GM13977 (cell line): ENCODE measurements at regions of chr5 and their contacts with region 1.

Region 1: DNA sequence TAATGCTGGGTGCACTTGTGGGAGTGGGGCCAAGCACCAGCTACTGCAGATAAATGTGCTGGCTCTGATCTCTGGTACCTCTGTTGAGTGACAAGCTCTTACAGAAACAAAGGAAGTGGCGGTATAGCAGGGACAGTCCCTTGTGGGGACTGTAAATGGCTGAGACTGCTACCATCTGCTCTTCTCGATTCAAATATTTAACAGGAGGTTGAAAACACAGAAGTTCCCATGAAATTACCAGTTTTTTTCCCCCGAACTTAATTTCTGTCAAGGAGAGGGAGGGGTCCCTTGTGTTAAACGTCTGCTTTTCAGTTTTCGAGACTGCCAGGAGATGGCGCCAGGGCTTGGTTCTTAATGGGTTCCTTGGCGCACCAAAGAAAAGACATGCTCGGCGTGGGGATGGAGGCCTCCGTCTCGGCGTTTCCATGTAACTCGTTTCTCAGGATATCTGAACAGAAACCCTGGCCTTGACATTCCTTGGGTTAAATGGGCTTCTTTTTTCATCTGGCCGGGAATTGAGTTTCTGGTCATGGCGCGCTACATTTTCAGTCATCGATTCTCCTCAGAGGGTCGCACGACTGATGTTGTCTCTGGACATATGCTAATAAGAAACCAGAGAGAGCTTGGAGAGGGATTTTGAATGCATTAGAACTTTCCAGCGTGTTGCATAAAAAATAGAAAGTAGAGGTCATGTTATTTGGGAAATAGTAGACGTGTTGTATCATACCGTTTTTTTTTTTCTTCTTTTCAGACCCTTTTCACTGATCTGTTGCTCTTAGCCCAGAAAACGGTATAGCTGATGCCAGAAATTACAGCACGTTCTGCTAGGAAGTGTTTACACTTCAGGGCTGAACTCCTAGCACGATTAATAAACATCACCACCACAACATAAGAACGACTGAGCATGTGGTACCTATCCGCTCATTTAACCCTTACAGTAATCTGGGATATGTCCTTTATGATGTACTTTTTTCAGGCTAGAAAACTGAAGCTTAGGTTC is 64.0 kb downstream of the CARTPT start:
- DNase-seq: peak; percentile 68
- CTCF ChIP-seq: peak; percentile 88

Region 2: DNA sequence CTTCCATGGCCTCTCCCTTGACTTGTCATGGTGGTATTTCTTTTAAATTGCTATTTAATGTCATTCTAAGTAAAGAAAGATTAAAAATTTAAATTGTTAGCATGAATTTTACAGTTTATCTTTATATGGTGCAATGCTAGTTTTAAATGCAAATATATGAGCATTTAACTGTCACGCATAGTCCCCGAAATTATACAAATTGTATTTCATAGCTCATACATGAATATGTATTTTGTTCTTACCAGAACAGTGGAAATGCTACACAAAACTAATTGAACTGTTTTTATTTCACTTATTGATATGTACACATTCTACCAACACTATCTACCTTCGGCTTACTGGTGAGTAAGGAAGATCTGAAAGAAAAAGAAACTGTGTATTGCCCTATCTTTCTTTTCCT is 61.8 kb after region 1 on chr5:
- in situ Hi-C with region 1: no loop called
- DNase-seq: no peak
- CTCF ChIP-seq: no peak

Region 3: GRCh38 chr5:72018146-72018803 is 235.2 kb after region 1 on chr5:
- in situ Hi-C with region 1: loop called (anchors 25 kb)
- DNase-seq: peak; percentile 53
- CTCF ChIP-seq: peak; percentile 94